Ascending aorta (tissue), 2 donors: ENCODE measurements at regions of chr11 and their contacts with region 1.

Region 1: DNA sequence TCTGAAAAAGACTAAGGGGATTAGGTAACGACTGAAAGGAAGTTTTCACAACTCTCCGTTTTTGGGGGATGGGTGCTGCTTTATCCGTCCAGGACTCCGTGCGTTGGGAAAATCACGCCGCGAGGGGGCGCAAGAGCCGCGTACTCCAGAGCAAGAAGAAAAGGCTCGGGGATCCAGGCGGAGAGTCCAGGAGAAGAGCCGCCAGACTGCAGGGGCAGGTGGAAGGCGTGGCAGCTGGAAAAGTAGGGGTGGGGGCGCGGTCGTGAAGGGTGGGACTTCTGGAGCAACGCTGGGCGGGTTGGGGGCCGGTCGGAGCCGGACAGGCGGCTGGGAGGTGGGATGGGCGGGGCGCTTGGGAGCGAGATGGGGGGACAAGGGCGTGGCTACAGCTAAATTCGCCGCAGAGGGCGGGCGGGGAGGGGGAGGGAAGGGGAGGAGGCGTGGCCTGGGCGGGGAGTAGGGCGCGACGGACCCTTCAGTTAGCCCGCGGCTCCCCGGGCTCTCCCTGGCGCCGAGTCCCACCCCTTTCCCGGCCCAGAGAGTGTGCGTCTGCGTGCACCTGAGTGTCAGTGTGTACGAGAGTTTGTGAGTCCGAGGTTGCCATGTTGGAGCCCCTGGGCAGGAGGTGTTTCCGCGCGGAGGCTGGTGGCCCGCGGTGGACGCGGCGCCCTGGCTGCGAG is 613 bp upstream of the ARHGEF17 start:
- DNase-seq: peak; percentile 87 to 100
- H3K4me3 ChIP-seq: peak overlapping the region; percentile 71 to 75
- H3K27ac ChIP-seq: peak overlapping the region; percentile 94 to 96
- H3K4me1 ChIP-seq: peaks cover 0 to 2% of the 10 kb centered on the region in 2 donors
- H3K27me3 ChIP-seq: no peaks in the 10 kb centered on the region
- CTCF ChIP-seq: peak; percentile 80 to 96 (median 92)

Region 2: DNA sequence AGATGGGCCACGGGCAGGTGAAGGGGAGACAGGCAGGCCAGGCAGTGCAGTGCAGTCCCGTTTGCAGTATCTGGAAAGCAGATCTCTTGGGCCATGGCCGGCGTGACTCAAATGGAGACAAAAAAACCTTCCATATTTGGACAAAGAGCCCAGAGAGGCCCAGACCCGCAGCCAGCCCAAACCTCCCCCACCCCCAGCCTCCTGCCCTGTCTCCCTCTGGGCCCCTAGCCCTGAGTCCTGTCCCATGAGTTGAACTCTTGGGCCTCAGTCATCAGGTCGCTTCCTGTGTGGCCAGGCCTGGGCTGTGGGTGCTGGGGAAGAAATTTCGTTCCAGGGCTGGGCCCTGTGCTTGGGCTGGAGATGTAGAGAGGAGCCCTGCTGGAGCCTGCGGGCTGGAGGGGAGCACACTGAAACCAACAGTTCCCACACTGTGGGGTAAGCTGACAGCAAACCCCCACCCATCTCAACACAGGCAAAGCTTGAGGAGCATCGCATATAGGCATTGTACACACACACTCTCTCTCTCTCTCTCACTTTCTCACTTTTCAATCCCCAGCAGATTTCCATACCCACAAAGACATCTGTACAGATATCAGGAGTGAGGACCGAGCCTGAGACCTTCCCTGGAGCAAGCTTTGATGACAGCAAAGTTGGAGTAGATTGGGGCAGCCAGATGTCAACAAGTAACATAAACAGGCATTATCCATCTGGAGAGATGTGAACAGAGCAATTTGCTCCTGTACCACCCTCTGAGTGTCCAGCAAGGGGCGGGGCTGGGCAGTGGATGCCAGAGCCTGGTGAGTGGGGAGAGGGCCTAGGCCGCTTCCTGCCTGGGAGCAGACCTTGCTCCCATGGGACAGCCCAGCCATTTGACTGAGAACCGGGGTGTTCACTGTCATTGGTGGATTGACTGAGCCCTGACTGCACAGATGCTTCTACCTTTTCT is 17.8 kb after region 1 on chr11:
- intact Hi-C with region 1: loop called (anchors 2 kb)
- DNase-seq: peak; percentile 58 to 90
- H3K4me3 ChIP-seq: peak overlapping the region in 1 of 2 donors; percentile 37
- H3K27ac ChIP-seq: peak overlapping the region; percentile 94 to 96
- H3K4me1 ChIP-seq: peaks cover 59 to 93% of the 10 kb centered on the region in 2 donors
- H3K27me3 ChIP-seq: no peaks in the 10 kb centered on the region
- CTCF ChIP-seq: no peak

Region 3: GRCh38 chr11:73335204-73335923 is 27.9 kb after region 1 on chr11:
- intact Hi-C with region 1: loop called (anchors 1 kb)
- DNase-seq: peak in 1 of 2 donors; percentile 91
- H3K4me3 ChIP-seq: peak overlapping the region in 1 of 2 donors; percentile 40
- H3K27ac ChIP-seq: peak overlapping the region; percentile 79 to 89
- H3K4me1 ChIP-seq: peaks cover 40 to 72% of the 10 kb centered on the region in 2 donors
- H3K27me3 ChIP-seq: no peaks in the 10 kb centered on the region
- CTCF ChIP-seq: peak; percentile 91 to 99 (median 99)

Region 4: DNA sequence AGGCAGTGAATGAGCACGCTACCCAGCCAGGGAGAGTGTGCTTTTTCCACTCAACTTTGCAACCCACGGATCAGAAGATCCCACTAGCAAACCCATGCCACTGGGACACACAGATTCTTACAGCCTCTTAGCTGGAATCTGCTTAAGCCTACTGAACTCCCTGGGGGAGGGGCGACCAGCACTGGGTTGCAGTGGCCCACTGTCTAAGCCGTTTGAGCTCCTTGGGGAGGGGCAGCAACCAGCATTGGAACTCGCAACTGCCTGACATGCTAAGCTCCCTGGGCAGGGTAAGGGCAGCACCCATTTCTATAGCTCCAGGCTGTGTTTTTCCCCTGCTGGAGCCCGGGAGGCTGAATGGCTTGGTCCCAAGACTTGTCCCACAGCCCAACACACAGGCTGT is 190.9 kb after region 1 on chr11:
- intact Hi-C with region 1: no loop called
- DNase-seq: no peak
- H3K4me3 ChIP-seq: no peak overlapping the region
- H3K27ac ChIP-seq: no peak overlapping the region
- H3K4me1 ChIP-seq: no peaks in the 10 kb centered on the region
- H3K27me3 ChIP-seq: no peaks in the 10 kb centered on the region
- CTCF ChIP-seq: no peak

Region 5: DNA sequence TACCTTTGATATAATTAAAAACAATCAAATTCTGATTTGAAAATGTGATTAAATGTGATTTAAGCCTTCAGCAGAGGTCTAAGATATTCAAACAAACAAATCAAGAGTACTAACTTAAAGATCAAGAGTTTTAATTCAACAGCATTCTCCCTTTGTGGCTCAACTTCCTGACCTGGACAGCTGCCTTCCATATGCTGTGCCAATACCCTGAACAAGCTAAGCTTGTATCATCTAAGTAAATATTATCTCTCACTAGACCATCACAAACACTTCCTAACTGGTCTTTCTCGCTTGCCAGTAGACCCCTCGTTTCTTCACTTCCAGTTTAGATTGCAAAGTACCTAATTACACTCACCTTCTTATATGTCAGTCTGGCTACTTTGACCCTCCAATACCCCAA is 1039.9 kb after region 1 on chr11:
- intact Hi-C with region 1: no loop called
- DNase-seq: no peak
- H3K4me3 ChIP-seq: no peak overlapping the region
- H3K27ac ChIP-seq: no peak overlapping the region
- H3K4me1 ChIP-seq: no peaks in the 10 kb centered on the region
- H3K27me3 ChIP-seq: no peaks in the 10 kb centered on the region
- CTCF ChIP-seq: no peak